MCF 10A (cell line): ENCODE measurements at regions of chr16 and their contacts with region 1.

Region 1: DNA sequence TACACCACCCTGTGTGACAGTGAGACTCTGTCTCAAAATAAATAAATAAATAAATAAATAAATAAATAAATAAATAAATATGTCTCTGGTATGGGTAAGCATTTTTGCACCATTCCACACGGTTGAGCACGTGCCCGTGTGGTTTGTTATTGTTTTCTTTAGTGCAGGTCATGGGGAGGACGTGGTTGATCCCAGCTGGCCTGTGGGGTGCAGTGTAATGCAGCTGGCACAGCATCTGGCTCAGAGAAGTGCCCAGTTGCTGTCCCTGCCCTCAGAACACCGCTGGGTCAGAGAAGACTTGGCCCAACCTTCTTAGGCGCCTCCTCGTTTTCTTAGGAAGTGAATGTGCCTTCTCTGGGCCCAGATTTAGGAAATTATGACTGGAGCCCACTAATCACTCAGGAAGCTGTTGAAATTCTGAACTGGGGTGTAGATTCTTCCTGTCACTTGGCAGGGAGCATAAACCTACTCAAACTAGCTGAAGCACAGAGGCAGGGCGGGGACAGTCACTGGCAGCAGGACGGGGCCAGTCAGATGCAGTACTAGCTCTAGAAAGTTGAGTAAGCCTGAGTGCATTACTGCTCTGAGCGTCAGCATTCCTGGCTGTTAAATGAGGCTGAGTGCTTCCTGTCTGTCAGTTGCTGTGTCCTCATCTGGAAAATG is 85.9 kb downstream of the SNX29 start:
- DNase-seq: peak; percentile 93
- H3K4me3 Mint-ChIP-seq: no peak overlapping the region
- H3K27ac Mint-ChIP-seq: peak overlapping the region; percentile 76
- H3K4me1 Mint-ChIP-seq: peaks cover 27% of the 10 kb centered on the region
- H3K27me3 Mint-ChIP-seq: no peaks in the 10 kb centered on the region
- CTCF ChIP-seq: no peak

Region 2: DNA sequence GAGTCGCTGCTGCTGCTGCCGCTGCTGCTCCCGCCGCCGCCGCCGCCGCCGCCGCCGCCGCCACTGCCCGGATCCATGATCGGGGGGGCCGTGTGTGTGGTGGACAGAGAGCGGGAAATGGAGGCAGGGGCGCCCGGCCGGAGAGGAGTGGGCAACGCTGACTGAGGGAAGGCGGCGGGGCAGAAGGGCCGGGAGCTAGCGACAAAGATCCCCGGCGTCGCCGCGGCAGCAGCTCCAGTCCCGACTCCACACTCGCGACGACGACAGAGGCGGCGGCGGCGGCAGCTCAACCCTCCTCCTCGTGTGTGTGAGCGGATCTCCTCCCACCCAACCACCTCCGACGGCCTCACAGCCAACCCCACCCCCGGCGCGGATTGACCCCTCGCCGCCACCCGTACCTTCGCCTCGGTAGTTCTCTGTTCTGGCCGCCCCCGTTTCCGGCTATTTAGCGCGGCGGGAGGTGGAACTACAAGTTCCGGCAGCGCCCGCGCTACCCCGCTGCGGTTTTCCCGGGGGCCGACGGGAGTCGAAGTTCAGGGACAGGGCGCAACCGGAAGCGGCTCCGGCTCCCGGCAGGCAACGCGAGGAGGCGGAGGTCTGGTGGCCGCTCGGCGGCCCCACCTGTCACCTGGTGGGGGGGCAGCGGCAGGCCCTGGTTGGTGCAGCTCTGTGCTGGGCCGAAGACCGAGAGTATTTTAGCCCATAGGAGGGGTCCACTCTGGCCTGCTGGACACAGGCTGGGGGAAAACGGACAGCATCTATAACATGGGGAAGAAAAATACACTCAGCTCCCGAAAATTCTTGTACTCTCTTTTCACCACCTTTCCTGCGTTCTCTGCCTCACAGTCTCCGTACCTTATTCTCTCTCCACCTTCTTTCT is 146.6 kb before region 1 on chr16 and contains the start of gene GSPT1:
- CTCF ChIA-PET with region 1: interaction called, 4 read pairs
- POLR2A ChIA-PET with region 1: interaction called, 43 read pairs
- intact Hi-C with region 1: loop called (anchors 5 kb)
- DNase-seq: peak; percentile 98
- H3K4me3 Mint-ChIP-seq: peak within 1 kb of the TSS; percentile 88
- H3K27ac Mint-ChIP-seq: peak within 1 kb of the TSS; percentile 71
- H3K4me1 Mint-ChIP-seq: peaks cover 15% of the 10 kb centered on the region
- H3K27me3 Mint-ChIP-seq: no peaks in the 10 kb centered on the region
- CTCF ChIP-seq: no peak
- total RNA-seq, gene GSPT1: 163 and 199 TPM in 2 replicates

Region 3: DNA sequence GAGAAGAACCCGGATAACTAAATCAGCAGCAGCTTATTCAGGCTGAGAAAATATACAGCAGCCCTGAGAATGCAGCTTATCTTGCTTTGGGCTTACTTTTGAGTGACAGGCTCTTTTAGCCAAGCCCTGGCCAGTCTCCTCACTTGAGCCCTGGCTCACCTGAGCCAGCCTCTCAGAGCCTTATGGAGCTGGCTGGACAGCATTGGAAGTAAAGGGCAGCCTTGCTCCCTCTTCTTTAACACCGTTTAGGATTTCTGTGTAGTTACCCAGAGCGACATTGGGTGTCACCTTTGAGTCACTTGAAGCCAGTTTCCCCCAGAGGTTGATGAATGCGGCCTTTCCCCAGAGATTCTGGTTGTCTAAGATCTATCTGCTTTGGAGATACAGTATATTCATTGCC is 112.9 kb before region 1 on chr16:
- CTCF ChIA-PET with region 1: interaction called, 85 read pairs
- POLR2A ChIA-PET with region 1: no interaction called
- intact Hi-C with region 1: no loop called
- DNase-seq: peak; percentile 56
- H3K4me3 Mint-ChIP-seq: no peak overlapping the region
- H3K27ac Mint-ChIP-seq: no peak overlapping the region
- H3K4me1 Mint-ChIP-seq: no peaks in the 10 kb centered on the region
- H3K27me3 Mint-ChIP-seq: no peaks in the 10 kb centered on the region
- CTCF ChIP-seq: peak; percentile 39

Region 4: DNA sequence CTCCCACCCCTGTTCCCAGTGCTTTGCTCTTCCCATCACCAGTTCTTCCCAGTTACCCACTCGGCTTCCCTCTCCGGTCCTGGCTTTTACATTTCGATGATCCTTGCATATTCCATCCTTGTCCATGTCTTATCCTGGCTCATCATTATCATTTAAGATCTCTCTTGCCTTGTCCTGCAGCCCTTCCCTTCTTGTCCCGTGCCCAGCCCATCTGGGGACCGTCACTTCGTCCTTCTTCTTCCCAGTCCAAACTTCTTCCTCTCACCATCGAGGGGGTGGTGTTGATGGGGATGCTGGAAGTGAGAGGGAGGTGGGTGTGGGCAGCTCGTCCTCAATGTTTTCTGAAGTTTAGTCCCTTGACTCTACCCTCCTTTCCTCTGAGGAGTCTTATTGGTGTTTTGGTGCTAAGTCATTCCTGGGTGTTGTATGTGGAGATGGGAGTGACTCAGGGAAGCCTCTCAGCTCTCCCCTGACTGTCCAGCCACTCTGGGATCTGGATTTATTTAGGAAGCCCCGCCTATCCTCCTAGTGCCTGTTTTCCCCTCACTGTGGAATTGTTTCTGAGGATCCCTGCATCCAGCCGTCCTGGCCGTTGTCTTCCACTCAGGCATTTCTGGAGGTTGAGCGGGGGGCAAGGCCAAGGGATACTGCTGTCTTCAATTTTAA is 85.0 kb before region 1 on chr16:
- CTCF ChIA-PET with region 1: interaction called, 44 read pairs
- POLR2A ChIA-PET with region 1: interaction called, 41 read pairs
- intact Hi-C with region 1: loop called (anchors 1 kb)
- DNase-seq: peak; percentile 47
- H3K4me3 Mint-ChIP-seq: peak overlapping the region; percentile 87
- H3K27ac Mint-ChIP-seq: peak overlapping the region; percentile 86
- H3K4me1 Mint-ChIP-seq: peaks cover 30% of the 10 kb centered on the region
- H3K27me3 Mint-ChIP-seq: no peaks in the 10 kb centered on the region
- CTCF ChIP-seq: no peak

Region 5: DNA sequence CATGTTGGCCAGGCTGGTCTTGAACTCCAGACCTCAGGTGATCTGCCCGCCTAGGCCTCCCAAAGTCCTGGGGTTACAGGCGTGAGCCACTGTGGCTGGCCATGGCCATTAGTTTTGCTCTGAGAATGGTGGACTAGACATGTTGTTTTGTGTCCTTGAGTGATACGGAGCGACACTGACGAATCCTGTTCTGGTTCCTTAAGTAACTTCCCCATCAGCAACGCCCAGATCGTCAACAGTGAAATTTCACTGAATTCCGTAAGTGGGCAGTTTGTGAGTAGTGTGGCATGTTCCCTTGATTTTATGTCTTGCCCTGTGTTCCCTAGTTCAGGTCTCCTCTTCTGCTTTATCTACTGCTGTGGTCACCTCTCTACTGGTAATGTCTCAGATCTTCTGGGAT is 18.5 kb before region 1 on chr16:
- CTCF ChIA-PET with region 1: interaction called, 3 read pairs
- POLR2A ChIA-PET with region 1: interaction called, 15 read pairs
- intact Hi-C with region 1: no loop called
- DNase-seq: no peak
- H3K4me3 Mint-ChIP-seq: no peak overlapping the region
- H3K27ac Mint-ChIP-seq: no peak overlapping the region
- H3K4me1 Mint-ChIP-seq: peaks cover 4% of the 10 kb centered on the region
- H3K27me3 Mint-ChIP-seq: no peaks in the 10 kb centered on the region
- CTCF ChIP-seq: no peak

Region 6: GRCh38 chr16:12170091-12171040 is 107.9 kb after region 1 on chr16:
- CTCF ChIA-PET with region 1: no interaction called
- POLR2A ChIA-PET with region 1: no interaction called
- intact Hi-C with region 1: no loop called
- DNase-seq: no peak
- H3K4me3 Mint-ChIP-seq: no peak overlapping the region
- H3K27ac Mint-ChIP-seq: no peak overlapping the region
- H3K4me1 Mint-ChIP-seq: no peaks in the 10 kb centered on the region
- H3K27me3 Mint-ChIP-seq: no peaks in the 10 kb centered on the region
- CTCF ChIP-seq: no peak

Region 7: DNA sequence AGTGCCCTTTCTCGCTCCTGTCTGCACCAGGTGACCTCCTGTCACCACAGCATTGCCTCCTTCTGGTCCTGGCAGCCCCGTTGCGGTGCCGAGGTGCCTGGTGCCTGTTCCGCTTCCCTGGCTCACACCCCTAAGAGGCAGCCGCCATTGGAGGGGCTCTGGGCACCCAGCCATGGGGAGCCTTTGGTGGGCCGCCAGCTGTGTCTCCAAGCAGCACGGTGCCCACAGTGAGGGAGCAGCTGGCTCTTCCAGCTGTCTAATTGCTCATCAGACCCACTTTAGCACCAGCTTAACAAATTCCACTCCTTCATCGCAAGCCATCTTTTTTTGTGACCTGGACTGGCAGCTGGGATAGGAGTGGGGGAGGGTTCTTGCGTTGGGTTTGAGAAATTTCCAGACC is 190.1 kb after region 1 on chr16:
- CTCF ChIA-PET with region 1: no interaction called
- POLR2A ChIA-PET with region 1: no interaction called
- intact Hi-C with region 1: no loop called
- DNase-seq: no peak
- H3K4me3 Mint-ChIP-seq: no peak overlapping the region
- H3K27ac Mint-ChIP-seq: no peak overlapping the region
- H3K4me1 Mint-ChIP-seq: peaks cover 16% of the 10 kb centered on the region
- H3K27me3 Mint-ChIP-seq: no peaks in the 10 kb centered on the region
- CTCF ChIP-seq: no peak